H1 (cell line): ENCODE measurements at regions of chr3 and their contacts with region 1.

Region 1: DNA sequence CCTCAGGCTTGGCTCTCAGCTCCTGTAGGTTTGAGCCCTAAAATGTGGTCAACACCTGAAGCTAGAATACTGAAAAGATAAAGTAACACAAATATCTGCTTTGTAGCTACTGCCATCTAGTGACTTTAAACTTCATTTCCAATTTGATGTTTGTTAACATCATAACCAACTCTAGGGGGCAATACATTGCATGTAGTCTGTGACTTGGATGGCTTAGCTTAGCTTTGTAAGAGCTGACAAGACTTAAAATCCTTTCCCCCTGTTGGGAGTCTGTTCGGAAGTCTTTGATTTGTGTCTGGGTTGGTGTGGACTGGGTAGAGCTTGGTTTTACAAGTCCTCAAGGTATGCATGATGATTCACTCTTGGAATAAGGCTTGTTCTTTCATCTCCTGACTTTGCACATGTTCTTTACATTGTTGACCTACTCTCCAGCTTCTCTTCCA is 51.7 kb downstream of the SCN11A start:
- DNase-seq: no peak
- H3K4me3 ChIP-seq: no peak overlapping the region
- H3K27ac ChIP-seq: no peak overlapping the region
- H3K4me1 ChIP-seq: no peaks in the 10 kb centered on the region
- H3K27me3 ChIP-seq: no peaks in the 10 kb centered on the region
- CTCF ChIP-seq: peak in 2 of 3 experiments; percentile 92 to 98; a peak in 3 of 4 replicates
- EP300 ChIP-seq: no peak
- POLR2A ChIP-seq: no peak
- RAD21 ChIP-seq: peak; percentile 92

Region 2: DNA sequence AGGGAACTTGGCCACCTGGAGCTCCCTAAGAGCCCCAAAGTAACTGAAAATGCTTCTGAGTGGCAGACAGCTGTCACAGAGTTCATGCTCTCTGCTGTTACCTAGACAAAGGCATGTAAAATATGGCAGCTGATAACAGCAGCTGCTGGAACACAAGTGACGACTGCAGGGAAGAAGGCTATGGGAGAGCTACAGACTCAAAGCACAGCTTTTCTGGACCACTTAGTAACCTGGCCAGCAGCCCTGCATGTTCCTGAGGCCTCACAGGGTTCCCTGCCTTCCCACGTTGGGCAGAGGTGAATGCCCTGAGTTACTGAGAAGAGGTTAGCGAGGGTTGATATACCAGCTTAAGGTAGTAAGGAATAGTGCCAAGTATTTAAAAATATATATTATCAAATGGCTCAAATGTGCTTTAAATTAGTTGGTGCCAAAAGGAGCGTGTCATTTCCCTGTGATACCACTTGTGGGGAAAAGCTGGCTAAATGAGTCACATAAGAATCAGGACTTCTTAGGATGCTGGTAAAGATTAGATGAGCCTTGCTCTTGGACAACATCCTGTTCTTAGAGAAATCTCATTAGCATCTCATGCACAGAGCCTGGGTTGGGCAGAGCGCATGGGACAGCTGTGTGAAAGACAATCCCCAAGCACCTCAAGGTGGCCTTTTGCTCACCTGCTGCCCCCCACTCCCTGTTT is 274.2 kb before region 1 on chr3:
- CTCF ChIA-PET with region 1: interaction called, 10 read pairs
- POLR2A ChIA-PET with region 1: no interaction called
- DNase-seq: no peak
- H3K4me3 ChIP-seq: no peak overlapping the region
- H3K27ac ChIP-seq: no peak overlapping the region
- H3K4me1 ChIP-seq: peaks cover 0 to 6% (median 1%) of the 10 kb centered on the region in 4 experiments; a peak in 4 of 7 replicates
- H3K27me3 ChIP-seq: no peaks in the 10 kb centered on the region
- CTCF ChIP-seq: no peak
- EP300 ChIP-seq: no peak
- POLR2A ChIP-seq: no peak
- RAD21 ChIP-seq: no peak

Region 3: GRCh38 chr3:38907426-38907825 is 92.6 kb before region 1 on chr3:
- CTCF ChIA-PET with region 1: interaction called, 12 read pairs
- POLR2A ChIA-PET with region 1: no interaction called
- DNase-seq: no peak
- H3K4me3 ChIP-seq: no peak overlapping the region
- H3K27ac ChIP-seq: no peak overlapping the region
- H3K4me1 ChIP-seq: no peaks in the 10 kb centered on the region
- H3K27me3 ChIP-seq: no peaks in the 10 kb centered on the region
- CTCF ChIP-seq: no peak
- EP300 ChIP-seq: no peak
- POLR2A ChIP-seq: no peak
- RAD21 ChIP-seq: no peak

Region 4: DNA sequence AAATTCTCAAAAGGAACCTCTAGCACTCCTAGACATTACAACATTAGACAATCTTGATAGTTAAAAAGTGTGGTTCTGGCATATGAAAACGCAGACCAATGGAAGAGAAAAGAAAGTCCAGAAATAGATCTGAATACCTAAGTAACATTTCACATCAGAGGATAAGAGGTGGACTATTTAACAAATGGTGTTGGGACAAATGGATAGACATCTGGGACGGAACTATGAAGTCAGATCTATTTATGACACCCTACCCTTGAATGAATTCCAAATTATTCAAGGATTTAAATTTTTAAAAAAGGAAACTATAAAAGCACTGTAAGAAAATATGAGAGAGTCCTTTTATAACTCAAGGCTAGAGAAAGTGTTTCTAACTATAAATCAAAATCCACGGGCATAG is 59.6 kb before region 1 on chr3:
- CTCF ChIA-PET with region 1: no interaction called
- POLR2A ChIA-PET with region 1: no interaction called
- DNase-seq: no peak
- H3K4me3 ChIP-seq: no peak overlapping the region
- H3K27ac ChIP-seq: no peak overlapping the region
- H3K4me1 ChIP-seq: no peaks in the 10 kb centered on the region
- H3K27me3 ChIP-seq: no peaks in the 10 kb centered on the region
- CTCF ChIP-seq: no peak
- EP300 ChIP-seq: no peak
- POLR2A ChIP-seq: no peak
- RAD21 ChIP-seq: no peak

Region 5: GRCh38 chr3:38985581-38985980 is 14.4 kb before region 1 on chr3:
- CTCF ChIA-PET with region 1: interaction called, 37 read pairs
- POLR2A ChIA-PET with region 1: interaction called, 3 read pairs
- DNase-seq: no peak
- H3K4me3 ChIP-seq: no peak overlapping the region
- H3K27ac ChIP-seq: no peak overlapping the region
- H3K4me1 ChIP-seq: peaks cover 3 to 9% (median 5%) of the 10 kb centered on the region in 4 experiments; a peak in 6 of 7 replicates
- H3K27me3 ChIP-seq: no peaks in the 10 kb centered on the region
- CTCF ChIP-seq: no peak
- EP300 ChIP-seq: no peak
- POLR2A ChIP-seq: no peak
- RAD21 ChIP-seq: no peak

Region 6: GRCh38 chr3:39025222-39025970 is 25.4 kb after region 1 on chr3:
- CTCF ChIA-PET with region 1: interaction called, 60 read pairs
- POLR2A ChIA-PET with region 1: no interaction called
- DNase-seq: no peak
- H3K4me3 ChIP-seq: no peak overlapping the region
- H3K27ac ChIP-seq: no peak overlapping the region
- H3K4me1 ChIP-seq: no peaks in the 10 kb centered on the region
- H3K27me3 ChIP-seq: no peaks in the 10 kb centered on the region
- CTCF ChIP-seq: no peak
- EP300 ChIP-seq: no peak
- POLR2A ChIP-seq: no peak
- RAD21 ChIP-seq: no peak